Right ventricle myocardium superior (tissue), 1 donor: ENCODE measurements at regions of chr6 and their contacts with region 1.

Region 1: DNA sequence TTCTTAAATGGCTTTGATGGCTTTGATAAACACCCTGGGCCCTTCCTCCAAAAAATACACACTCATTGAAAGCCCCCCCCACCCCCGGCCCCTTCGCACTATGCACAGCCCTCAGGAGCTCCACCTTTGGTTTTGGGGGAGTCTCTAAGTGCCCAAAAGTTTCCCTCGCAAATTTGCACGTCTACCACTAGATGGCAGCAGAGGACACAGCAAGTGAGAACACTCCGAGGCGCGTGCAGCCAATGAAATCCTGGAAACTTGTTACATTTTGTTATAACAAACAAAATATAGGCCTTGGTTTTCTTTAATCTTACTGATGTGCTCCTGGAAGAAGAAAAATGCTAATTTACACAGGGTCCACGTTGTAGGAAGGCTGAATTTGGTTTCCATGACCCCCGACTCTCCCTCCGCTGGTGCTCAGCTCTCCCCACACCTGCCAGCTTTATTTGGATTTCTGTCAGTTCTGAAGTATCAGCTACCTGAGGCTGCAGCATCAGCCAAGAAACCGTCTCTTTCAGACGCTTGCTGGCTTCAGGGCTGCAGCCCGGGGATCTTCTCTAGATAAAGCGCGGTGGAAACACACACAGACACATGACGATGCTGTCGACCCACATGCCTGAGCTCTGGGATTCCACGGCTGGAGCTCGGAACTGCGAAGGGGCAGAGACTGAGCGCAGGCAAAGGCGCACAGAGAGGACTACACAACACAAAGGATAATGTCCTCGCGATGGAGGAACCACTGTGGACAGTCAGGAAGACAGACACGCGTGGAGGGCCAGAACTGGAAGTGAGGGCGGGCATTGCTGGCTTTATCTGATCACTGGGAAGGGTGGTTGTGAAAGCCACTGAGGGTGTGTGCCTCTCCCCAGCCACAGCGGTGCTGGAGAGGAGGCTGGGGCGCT is 148.4 kb upstream of the RPS6KA2 start:
- DNase-seq: no peak
- ATAC-seq: peak; percentile 46

Region 2: DNA sequence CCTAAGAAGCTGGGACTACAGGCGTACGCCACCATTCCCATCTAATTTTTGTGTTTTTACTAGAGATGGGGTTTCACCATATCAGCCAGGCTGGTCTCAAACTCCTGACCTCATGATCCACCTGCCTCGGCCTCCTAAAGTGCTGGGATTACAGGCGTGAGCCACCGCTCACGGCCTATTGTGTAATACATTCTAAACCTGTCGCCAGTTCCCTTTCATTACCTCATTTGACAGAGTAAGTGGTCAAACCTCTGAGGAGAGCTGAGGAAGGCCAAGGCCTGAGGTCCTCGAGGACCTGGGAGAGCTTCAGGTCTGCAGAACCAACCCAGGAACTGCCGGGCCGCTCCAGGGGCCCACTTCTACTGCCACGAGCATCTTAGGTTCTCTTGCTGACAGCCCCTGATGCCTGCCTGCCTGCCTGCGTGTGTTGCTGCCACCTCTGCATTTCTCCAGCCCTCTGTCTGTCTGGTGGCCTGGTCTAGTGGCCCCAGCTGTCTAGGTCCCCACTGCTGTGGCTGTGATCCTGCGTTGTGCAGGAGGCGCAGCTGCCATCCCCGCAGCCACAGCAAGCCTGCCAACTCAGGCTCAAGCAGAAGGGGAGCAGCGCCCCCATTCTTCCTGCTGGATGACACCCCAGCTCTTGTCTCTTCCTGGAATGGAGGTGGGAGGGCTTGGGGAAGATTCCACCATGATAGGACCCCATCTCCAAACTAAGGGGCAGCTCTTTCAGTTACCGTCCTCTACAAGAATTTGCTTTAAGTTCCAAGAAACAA is 512.5 kb before region 1 on chr6:
- intact Hi-C with region 1: no loop called
- DNase-seq: no peak
- ATAC-seq: no peak

Region 3: GRCh38 chr6:166925141-166925996 is 149.9 kb after region 1 on chr6:
- intact Hi-C with region 1: no loop called
- DNase-seq: no peak
- ATAC-seq: no peak

Region 4: DNA sequence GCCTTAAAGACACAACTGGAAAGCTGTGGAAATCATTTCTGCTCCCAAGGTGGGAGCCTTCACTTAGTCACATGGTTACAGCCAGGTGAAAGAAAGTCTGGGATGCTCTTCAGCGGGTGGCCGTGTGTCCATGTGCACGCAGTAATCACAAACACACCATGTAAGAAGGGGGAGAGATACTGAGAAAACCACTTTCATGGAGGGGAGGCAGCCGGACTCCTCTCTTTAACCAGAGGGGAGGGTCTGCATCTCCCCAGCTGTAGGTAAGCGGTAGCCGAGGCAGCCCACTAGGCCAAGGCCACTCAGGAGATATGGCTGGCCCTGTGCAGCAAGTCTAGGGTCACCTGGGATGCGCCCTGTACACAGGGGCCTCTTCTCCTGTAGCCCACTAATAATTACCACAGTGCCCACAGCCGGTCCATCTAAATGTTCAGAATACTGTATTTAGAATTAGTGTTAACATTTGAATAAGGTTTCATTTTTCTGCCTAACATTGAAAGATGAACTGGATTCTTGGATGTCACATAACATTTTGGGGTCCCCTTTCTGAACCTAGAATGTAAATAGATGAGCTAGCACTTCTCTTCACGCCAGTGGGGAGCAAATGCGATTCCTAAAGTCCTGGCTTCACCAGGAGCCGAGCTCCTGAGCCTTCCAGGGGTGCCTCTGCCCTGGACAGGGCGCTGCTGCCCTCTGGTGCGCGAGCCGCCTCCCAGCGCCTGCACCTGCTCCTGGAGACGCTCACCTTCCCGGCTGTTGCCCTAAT is 366.4 kb after region 1 on chr6:
- intact Hi-C with region 1: loop called (anchors 5 kb)
- DNase-seq: peak; percentile 68
- ATAC-seq: peak; percentile 95